CD4-positive, alpha-beta T cell (primary cell): ENCODE measurements at regions of chr3 and their contacts with region 1.

Region 1: DNA sequence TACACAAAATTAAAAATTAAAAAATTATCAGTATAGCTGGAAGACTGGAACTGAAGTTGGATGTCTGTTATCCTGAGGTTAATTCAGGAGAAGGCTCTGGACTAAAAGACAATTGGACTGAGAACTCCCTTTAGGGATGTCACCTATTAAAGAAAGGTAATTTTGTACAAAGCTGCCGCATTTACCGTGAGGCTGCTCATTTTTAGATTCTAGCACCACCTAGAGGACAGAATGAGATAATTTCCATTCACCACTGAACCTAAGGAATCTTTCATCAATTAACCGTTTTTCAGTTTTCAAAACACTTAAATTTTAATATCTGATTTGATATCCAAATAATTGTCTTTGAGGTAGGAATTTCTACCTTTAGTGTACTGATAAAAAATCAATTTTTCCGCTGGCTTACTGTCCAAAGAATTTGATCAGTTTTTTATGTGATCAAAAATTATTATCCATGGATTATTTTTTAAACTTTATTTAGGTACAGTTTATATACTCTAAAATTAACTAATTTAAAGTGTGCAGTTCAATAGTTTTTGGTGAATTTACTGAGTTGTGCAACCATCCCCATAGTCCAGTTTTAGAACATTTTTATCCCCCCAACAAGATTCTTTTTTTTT is 106.7 kb upstream of the TNIK start:
- DNase-seq: peak in 4 of 14 experiments; percentile 7 to 77 (median 70)
- ATAC-seq: peak; percentile 62
- H3K4me3 ChIP-seq: no peak overlapping the region
- H3K4me3 Mint-ChIP-seq: no peak overlapping the region
- H3K27ac ChIP-seq: no peak overlapping the region
- H3K27ac Mint-ChIP-seq: no peak overlapping the region
- H3K4me1 ChIP-seq: no peaks in the 10 kb centered on the region
- H3K4me1 Mint-ChIP-seq: peaks cover 4% of the 10 kb centered on the region
- H3K27me3 ChIP-seq: no peaks in the 10 kb centered on the region
- H3K27me3 Mint-ChIP-seq: peaks cover 9% of the 10 kb centered on the region
- CTCF ChIP-seq: peak; percentile 83

Region 2: GRCh38 chr3:169722724-169723123 is 1844.2 kb before region 1 on chr3:
- CTCF ChIA-PET with region 1: no interaction called
- POLR2A ChIA-PET with region 1: no interaction called
- intact Hi-C with region 1: no loop called
- DNase-seq: no peak
- ATAC-seq: no peak
- H3K4me3 ChIP-seq: no peak overlapping the region
- H3K4me3 Mint-ChIP-seq: no peak overlapping the region
- H3K27ac ChIP-seq: no peak overlapping the region
- H3K27ac Mint-ChIP-seq: no peak overlapping the region
- H3K4me1 ChIP-seq: no peaks in the 10 kb centered on the region
- H3K4me1 Mint-ChIP-seq: no peaks in the 10 kb centered on the region
- H3K27me3 ChIP-seq: no peaks in the 10 kb centered on the region
- H3K27me3 Mint-ChIP-seq: peaks cover 42% of the 10 kb centered on the region
- CTCF ChIP-seq: no peak

Region 3: DNA sequence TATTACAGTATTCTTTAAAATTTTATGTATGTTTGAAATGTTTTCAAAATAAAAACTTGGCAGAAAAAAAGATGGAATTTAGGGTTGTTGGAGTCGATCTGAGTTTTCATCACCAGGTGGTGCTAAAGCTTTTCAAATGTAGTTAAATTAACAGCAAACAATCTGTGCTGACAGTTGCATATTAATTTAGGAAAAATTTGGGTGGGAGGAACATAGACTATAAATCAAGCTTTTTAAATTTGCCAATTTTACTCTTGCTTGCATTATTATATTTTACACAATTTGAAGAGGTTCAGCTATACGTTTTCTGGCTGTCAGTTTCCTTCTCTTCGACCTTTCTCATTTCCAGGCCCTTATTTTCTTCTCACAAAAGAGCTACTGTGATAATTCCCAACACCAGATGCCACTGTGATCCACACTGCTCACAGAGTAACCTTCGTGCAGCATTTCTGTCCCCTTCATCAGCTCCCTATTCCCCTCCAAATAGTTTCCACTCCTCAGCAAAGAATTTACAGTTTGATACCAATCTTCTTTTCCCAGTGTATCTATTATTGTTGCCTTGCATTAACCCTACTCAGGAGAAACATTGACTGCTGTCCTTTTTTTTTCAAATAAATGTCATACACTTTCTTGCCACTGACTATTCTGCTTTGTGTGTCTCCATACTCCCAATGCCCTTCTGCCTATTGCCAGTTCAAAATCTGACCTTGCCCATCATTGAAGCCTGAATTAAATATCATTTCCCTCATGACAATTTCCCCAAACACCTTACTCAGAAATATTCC is 605.1 kb before region 1 on chr3:
- CTCF ChIA-PET with region 1: no interaction called
- POLR2A ChIA-PET with region 1: no interaction called
- intact Hi-C with region 1: loop called (anchors 1 kb)
- DNase-seq: peak in 4 of 14 experiments; percentile 4 to 45 (median 36)
- ATAC-seq: no peak
- H3K4me3 ChIP-seq: no peak overlapping the region
- H3K4me3 Mint-ChIP-seq: no peak overlapping the region
- H3K27ac ChIP-seq: no peak overlapping the region
- H3K27ac Mint-ChIP-seq: no peak overlapping the region
- H3K4me1 ChIP-seq: no peaks in the 10 kb centered on the region
- H3K4me1 Mint-ChIP-seq: no peaks in the 10 kb centered on the region
- H3K27me3 ChIP-seq: no peaks in the 10 kb centered on the region
- H3K27me3 Mint-ChIP-seq: peaks cover 7% of the 10 kb centered on the region
- CTCF ChIP-seq: peak; percentile 64

Region 4: DNA sequence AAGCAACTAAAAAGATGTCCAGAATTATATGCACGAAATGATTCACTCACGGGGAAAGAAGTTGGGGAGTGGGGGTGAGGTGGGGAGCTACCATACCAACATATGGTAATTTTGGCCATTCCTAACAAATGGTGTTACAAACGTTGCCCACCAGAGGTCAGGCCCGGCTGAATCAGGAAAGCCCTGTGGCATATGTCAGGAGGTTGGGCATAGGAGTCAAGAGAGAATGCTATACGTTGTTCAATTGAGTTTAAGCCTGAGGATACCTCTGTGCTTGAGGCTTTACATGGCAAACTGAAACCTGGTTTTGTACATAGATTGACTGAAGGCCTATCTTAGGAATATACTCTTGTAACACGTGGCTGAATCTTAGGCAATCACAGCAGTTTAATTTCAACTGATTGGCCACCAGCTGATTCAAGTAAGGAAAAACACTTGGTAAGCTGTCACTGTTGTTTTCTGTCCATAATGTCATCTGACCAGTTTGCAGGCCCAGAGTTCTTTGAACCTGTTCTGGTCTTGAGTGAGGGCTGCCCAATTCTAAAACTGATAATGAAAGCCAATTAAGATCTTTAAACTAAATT is 517.0 kb before region 1 on chr3:
- CTCF ChIA-PET with region 1: no interaction called
- POLR2A ChIA-PET with region 1: no interaction called
- intact Hi-C with region 1: loop called (anchors 2 to 5 kb)
- DNase-seq: peak; percentile 4 to 56 (median 26)
- ATAC-seq: peak; percentile 61
- H3K4me3 ChIP-seq: no peak overlapping the region
- H3K4me3 Mint-ChIP-seq: no peak overlapping the region
- H3K27ac ChIP-seq: no peak overlapping the region
- H3K27ac Mint-ChIP-seq: no peak overlapping the region
- H3K4me1 ChIP-seq: no peaks in the 10 kb centered on the region
- H3K4me1 Mint-ChIP-seq: no peaks in the 10 kb centered on the region
- H3K27me3 ChIP-seq: no peaks in the 10 kb centered on the region
- H3K27me3 Mint-ChIP-seq: peaks cover 10% of the 10 kb centered on the region
- CTCF ChIP-seq: peak; percentile 50

Region 5: DNA sequence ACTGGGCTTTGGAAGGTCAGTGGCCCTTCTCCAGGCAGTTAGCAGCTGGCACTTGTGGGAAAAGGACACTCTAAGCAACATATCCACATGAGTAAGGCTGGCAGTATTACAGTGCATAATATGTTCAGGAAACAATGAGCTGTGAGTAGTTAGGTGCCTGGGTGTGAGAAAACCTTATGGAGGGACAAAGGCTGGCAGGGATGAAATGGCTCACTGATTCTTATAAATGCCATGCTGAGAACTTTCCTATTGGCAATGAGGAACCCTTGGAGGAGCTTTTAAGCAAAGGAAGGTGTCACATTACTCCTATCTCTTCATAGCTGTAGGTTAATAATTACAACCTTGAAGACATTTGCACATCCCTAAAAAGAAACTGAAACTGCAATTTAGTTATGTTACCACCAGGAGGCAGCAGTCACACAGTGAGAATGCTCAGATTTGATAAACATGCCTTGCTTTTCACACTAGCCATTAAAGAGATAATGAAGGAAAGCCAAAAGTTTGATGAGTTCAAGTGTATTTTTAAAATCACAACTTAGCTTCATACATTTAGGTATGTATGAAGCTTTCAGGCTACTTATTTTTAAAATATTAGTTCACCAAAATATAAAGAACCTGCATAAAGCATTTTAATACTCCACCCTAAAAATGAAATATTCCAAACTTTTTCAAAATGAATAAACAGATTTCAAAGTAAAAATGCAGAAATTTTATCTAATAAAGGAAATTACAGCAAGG is 403.8 kb before region 1 on chr3:
- CTCF ChIA-PET with region 1: interaction called, 7 read pairs
- POLR2A ChIA-PET with region 1: no interaction called
- intact Hi-C with region 1: loop called (anchors 1 kb)
- DNase-seq: peak in 4 of 14 experiments; percentile 11 to 62 (median 56)
- ATAC-seq: no peak
- H3K4me3 ChIP-seq: no peak overlapping the region
- H3K4me3 Mint-ChIP-seq: no peak overlapping the region
- H3K27ac ChIP-seq: no peak overlapping the region
- H3K27ac Mint-ChIP-seq: no peak overlapping the region
- H3K4me1 ChIP-seq: peaks cover 8% of the 10 kb centered on the region
- H3K4me1 Mint-ChIP-seq: peaks cover 32% of the 10 kb centered on the region
- H3K27me3 ChIP-seq: no peaks in the 10 kb centered on the region
- H3K27me3 Mint-ChIP-seq: no peaks in the 10 kb centered on the region
- CTCF ChIP-seq: peak; percentile 77

Region 6: GRCh38 chr3:171187706-171188290 is 379.1 kb before region 1 on chr3:
- CTCF ChIA-PET with region 1: interaction called, 3 read pairs
- POLR2A ChIA-PET with region 1: interaction called, 4 read pairs
- intact Hi-C with region 1: loop called (anchors 1 kb)
- DNase-seq: peak in 4 of 14 experiments; percentile 28 to 61 (median 52)
- ATAC-seq: peak; percentile 59
- H3K4me3 ChIP-seq: no peak overlapping the region
- H3K4me3 Mint-ChIP-seq: no peak overlapping the region
- H3K27ac ChIP-seq: no peak overlapping the region
- H3K27ac Mint-ChIP-seq: no peak overlapping the region
- H3K4me1 ChIP-seq: peaks cover 5% of the 10 kb centered on the region
- H3K4me1 Mint-ChIP-seq: peaks cover 33% of the 10 kb centered on the region
- H3K27me3 ChIP-seq: no peaks in the 10 kb centered on the region
- H3K27me3 Mint-ChIP-seq: no peaks in the 10 kb centered on the region
- CTCF ChIP-seq: peak; percentile 70

Region 7: GRCh38 chr3:171320750-171321558 is 246.0 kb before region 1 on chr3:
- CTCF ChIA-PET with region 1: no interaction called
- POLR2A ChIA-PET with region 1: no interaction called
- intact Hi-C with region 1: loop called (anchors 5 kb)
- DNase-seq: no peak
- ATAC-seq: no peak
- H3K4me3 ChIP-seq: no peak overlapping the region
- H3K4me3 Mint-ChIP-seq: no peak overlapping the region
- H3K27ac ChIP-seq: no peak overlapping the region
- H3K27ac Mint-ChIP-seq: no peak overlapping the region
- H3K4me1 ChIP-seq: no peaks in the 10 kb centered on the region
- H3K4me1 Mint-ChIP-seq: peaks cover 52% of the 10 kb centered on the region
- H3K27me3 ChIP-seq: no peaks in the 10 kb centered on the region
- H3K27me3 Mint-ChIP-seq: no peaks in the 10 kb centered on the region
- CTCF ChIP-seq: no peak

Region 8: GRCh38 chr3:171328419-171329082 is 238.4 kb before region 1 on chr3:
- CTCF ChIA-PET with region 1: no interaction called
- POLR2A ChIA-PET with region 1: no interaction called
- intact Hi-C with region 1: loop called (anchors 5 kb)
- DNase-seq: peak in 13 of 14 experiments; percentile 22 to 83 (median 40)
- ATAC-seq: peak; percentile 98
- H3K4me3 ChIP-seq: no peak overlapping the region
- H3K4me3 Mint-ChIP-seq: peak overlapping the region; percentile 3
- H3K27ac ChIP-seq: no peak overlapping the region
- H3K27ac Mint-ChIP-seq: peak overlapping the region; percentile 14
- H3K4me1 ChIP-seq: peaks cover 17% of the 10 kb centered on the region
- H3K4me1 Mint-ChIP-seq: peaks cover 71% of the 10 kb centered on the region
- H3K27me3 ChIP-seq: no peaks in the 10 kb centered on the region
- H3K27me3 Mint-ChIP-seq: no peaks in the 10 kb centered on the region
- CTCF ChIP-seq: peak; percentile 35

Region 9: GRCh38 chr3:171636666-171637065 is 69.8 kb after region 1 on chr3:
- CTCF ChIA-PET with region 1: no interaction called
- POLR2A ChIA-PET with region 1: no interaction called
- intact Hi-C with region 1: no loop called
- DNase-seq: no peak
- ATAC-seq: no peak
- H3K4me3 ChIP-seq: no peak overlapping the region
- H3K4me3 Mint-ChIP-seq: no peak overlapping the region
- H3K27ac ChIP-seq: no peak overlapping the region
- H3K27ac Mint-ChIP-seq: no peak overlapping the region
- H3K4me1 ChIP-seq: no peaks in the 10 kb centered on the region
- H3K4me1 Mint-ChIP-seq: no peaks in the 10 kb centered on the region
- H3K27me3 ChIP-seq: no peaks in the 10 kb centered on the region
- H3K27me3 Mint-ChIP-seq: no peaks in the 10 kb centered on the region
- CTCF ChIP-seq: no peak

Region 10: DNA sequence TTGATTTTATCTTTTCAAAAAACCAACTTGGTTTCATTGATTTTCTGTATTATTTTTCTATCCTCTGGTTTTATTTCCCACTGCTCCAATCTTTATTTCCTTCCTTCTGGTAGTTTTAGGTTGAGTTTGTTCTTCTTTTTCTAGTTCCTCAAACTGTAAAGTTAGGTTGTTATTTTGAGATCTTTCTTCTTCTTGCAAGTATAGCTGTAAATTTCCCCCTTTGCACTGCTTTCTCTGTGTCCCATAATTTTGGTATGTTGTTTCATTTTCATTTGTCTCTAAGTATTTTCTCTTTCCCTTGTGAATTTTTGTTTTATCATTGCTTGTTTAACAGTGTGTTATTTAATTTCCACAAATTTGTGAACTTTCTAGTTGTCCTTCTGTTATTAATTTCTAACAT is 123.4 kb after region 1 on chr3:
- CTCF ChIA-PET with region 1: no interaction called
- POLR2A ChIA-PET with region 1: no interaction called
- intact Hi-C with region 1: no loop called
- DNase-seq: no peak
- ATAC-seq: no peak
- H3K4me3 ChIP-seq: no peak overlapping the region
- H3K4me3 Mint-ChIP-seq: no peak overlapping the region
- H3K27ac ChIP-seq: no peak overlapping the region
- H3K27ac Mint-ChIP-seq: no peak overlapping the region
- H3K4me1 ChIP-seq: no peaks in the 10 kb centered on the region
- H3K4me1 Mint-ChIP-seq: no peaks in the 10 kb centered on the region
- H3K27me3 ChIP-seq: no peaks in the 10 kb centered on the region
- H3K27me3 Mint-ChIP-seq: peaks cover 5% of the 10 kb centered on the region
- CTCF ChIP-seq: no peak

Region 11: DNA sequence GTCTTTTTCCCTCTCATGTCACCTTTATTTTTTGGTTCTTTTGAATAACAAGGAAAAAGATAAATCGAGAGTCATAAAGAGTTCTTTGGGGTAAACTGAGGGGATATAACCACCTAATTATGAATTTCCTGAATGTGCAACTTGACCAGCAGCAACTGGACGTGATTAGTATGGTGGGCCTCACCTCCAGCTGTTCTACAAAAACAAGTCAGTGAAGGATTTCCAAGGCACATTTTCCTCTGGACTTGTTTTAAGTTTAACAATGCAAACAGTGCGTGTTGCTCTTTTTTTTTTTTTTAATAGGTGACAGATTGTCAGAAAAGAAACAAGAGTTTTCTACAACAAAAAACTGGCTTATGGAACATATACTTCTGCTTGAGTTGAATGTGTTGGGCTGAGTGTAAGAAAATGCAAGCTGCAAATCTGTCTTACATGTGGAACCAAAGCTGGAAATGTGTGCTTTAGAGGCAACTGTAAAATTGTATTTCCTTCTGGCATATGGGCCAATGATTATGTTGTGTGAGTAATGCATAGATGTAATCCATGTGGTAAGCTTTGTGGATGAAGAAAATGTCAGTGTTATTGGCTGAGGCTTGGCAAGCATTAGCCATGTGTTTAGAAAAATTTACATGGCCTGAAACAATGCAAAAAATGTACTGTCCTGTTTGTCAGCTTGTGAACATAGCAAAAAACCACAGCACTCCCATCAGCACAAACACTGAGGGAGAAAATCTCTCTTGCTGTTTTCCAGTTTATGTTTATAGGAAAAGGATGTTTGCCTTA is 427.9 kb after region 1 on chr3:
- CTCF ChIA-PET with region 1: no interaction called
- POLR2A ChIA-PET with region 1: no interaction called
- intact Hi-C with region 1: no loop called
- DNase-seq: no peak
- ATAC-seq: no peak
- H3K4me3 ChIP-seq: no peak overlapping the region
- H3K4me3 Mint-ChIP-seq: no peak overlapping the region
- H3K27ac ChIP-seq: no peak overlapping the region
- H3K27ac Mint-ChIP-seq: no peak overlapping the region
- H3K4me1 ChIP-seq: no peaks in the 10 kb centered on the region
- H3K4me1 Mint-ChIP-seq: no peaks in the 10 kb centered on the region
- H3K27me3 ChIP-seq: no peaks in the 10 kb centered on the region
- H3K27me3 Mint-ChIP-seq: peaks cover 16% of the 10 kb centered on the region
- CTCF ChIP-seq: no peak